Activated naive CD4-positive, alpha-beta T cell treated with anti-CD3 and anti-CD28 coated beads for 36 hours (primary cell): ENCODE measurements at regions of chr6 and their contacts with region 1.

Region 1: DNA sequence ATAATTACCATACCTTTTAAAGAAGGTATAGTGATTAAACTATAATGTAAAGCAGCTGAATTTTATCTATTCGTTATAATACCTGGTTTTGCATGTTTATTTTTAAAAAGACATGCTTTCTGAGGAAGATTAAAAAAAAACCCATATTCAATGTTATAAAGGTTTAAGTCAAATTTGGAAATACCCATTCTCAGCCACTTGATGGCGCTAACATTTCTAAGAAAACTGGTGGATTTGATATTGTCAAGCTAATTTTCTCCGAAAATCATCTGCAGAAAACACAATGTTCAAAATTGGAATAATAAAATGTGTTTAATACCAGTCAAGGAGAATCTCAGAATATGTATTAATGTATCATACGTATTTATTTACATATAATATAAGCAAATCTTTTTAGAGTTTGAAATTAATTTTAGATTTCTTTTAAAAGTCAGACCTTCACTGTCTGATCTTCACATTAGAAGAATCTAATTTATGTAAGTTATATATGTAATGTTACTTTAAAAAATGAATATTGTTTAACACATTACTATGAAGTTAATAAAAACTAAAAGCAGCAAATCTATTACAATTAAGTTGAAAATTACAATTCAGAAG is 35.0 kb downstream of the SHPRH start:
- DNase-seq: peak; percentile 9
- H3K4me3 Mint-ChIP-seq: no peak overlapping the region
- H3K27ac Mint-ChIP-seq: no peak overlapping the region
- H3K4me1 Mint-ChIP-seq: no peaks in the 10 kb centered on the region
- H3K27me3 Mint-ChIP-seq: no peaks in the 10 kb centered on the region

Region 2: GRCh38 chr6:145428706-145429105 is 500.4 kb before region 1 on chr6:
- CTCF ChIA-PET with region 1: no interaction called
- intact Hi-C with region 1: no loop called
- DNase-seq: no peak
- H3K4me3 Mint-ChIP-seq: no peak overlapping the region
- H3K27ac Mint-ChIP-seq: no peak overlapping the region
- H3K4me1 Mint-ChIP-seq: no peaks in the 10 kb centered on the region
- H3K27me3 Mint-ChIP-seq: no peaks in the 10 kb centered on the region

Region 3: GRCh38 chr6:146785001-146785585 is 856.0 kb after region 1 on chr6:
- CTCF ChIA-PET with region 1: no interaction called
- intact Hi-C with region 1: loop called (anchors 1 kb)
- DNase-seq: peak; percentile 52
- H3K4me3 Mint-ChIP-seq: no peak overlapping the region
- H3K27ac Mint-ChIP-seq: no peak overlapping the region
- H3K4me1 Mint-ChIP-seq: no peaks in the 10 kb centered on the region
- H3K27me3 Mint-ChIP-seq: no peaks in the 10 kb centered on the region